GM10248 (cell line): ENCODE measurements at regions of chr1 and their contacts with region 1.

Region 1: DNA sequence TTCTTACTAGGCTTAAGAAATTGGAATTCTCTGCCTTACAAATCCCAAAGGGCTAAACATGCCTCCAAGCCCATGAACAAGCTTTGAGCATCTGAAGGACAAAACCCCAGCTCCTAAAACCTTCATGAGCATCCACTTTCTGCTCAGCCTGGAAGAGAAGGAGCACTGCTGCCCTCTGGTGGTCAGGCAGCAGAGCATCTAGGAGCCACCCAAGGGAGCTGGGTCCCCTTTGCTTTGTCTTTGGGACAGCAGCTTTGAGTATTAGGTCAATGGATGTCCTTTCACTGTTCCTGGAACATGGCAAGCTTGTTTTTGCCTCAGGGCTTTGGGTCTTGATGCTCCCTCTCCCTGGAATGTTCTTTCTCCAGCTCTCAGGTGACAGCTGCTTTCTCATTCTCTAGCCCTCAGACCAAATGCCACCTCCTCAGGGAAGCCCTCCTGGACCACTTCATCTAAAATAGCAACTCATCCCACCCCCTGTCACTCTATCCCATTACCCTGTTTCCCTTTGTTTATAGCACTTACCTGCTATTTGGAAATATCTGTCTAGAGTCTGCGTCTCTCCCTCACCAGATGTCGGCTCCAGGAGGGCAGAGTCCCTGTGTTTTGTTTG is 25.7 kb downstream of the RAB7B start:
- DNase-seq: peak; percentile 80
- CTCF ChIP-seq: peak; percentile 95

Region 2: GRCh38 chr1:205591522-205592351 is 385.8 kb before region 1 on chr1:
- CTCF ChIA-PET with region 1: interaction called, 17 read pairs
- POLR2A ChIA-PET with region 1: no interaction called
- DNase-seq: peak; percentile 83
- CTCF ChIP-seq: peak; percentile 98

Region 3: DNA sequence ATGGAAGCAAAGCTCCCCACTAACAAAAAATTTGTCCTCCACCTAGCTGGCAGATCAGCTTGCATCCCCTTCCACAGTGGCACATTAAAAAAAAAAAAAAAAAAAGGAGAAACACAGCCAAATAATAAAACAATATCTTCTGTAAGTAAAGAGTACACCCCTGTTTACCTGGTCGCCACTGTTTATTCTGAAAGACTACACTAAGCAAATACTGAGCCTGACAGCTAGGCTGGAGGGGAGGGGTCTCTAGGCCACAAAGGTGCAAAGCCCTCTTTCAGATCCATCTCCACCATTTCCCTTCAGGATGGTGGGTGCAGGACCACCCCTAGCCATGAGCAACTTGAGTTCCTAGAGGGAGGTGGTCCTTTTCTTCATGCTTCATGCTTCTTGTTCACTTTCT is 274.4 kb before region 1 on chr1:
- CTCF ChIA-PET with region 1: no interaction called
- POLR2A ChIA-PET with region 1: no interaction called
- DNase-seq: no peak
- CTCF ChIP-seq: no peak

Region 4: DNA sequence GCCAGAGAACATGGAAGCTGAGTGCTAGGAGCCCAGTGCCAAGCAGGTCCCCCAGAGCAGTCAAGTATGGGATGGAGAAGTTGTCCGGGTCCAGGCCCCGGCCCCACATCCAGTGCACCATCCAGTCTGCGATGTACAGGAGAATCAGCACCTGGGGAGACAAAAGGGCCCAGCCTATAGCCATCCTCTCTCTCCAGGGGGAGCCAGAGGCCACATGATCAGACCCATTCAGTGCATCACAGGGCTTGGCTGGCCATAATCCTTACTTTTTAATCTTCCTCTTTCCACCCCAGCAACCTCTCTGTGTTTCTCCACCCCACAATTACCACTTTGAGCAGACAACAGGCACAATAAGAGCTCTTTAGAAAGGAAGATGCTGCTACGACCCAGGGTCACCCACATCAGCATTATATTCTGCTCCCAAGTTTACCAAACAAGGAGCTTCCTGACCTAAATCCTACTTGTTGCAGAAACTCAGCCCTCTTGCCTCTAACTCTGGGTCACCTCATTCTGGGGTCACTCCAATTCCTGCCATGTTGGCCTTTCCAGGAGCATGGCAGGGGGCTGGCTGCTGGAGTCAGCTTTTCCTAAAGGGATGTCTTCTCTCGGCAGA is 185.8 kb before region 1 on chr1:
- CTCF ChIA-PET with region 1: interaction called, 168 read pairs
- POLR2A ChIA-PET with region 1: interaction called, 5 read pairs
- DNase-seq: peak; percentile 77
- CTCF ChIP-seq: peak; percentile 75

Region 5: GRCh38 chr1:205930799-205931281 is 46.7 kb before region 1 on chr1:
- CTCF ChIA-PET with region 1: interaction called, 24 read pairs
- POLR2A ChIA-PET with region 1: no interaction called
- DNase-seq: no peak
- CTCF ChIP-seq: no peak

Region 6: DNA sequence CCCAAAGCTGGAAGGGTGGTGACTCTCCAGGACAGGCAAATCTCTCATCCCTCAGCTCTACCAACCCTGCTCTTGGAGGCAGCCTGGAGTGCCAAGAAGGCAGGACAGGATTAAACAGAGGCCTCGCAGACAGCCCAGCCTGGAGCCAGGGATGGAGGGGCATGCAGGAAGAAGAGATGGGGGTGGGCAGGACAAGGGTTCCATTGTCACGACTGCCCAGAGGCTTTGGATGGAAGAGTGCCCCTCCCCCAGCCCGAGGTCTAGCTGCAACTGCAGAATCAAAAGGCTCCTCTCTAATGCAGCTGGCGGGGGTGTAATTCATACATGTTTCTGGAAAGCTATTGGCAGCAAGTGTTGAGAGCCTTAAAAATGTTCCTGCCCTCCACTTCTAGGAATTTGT is 16.8 kb after region 1 on chr1:
- CTCF ChIA-PET with region 1: interaction called, 53 read pairs
- POLR2A ChIA-PET with region 1: no interaction called
- DNase-seq: no peak
- CTCF ChIP-seq: no peak

Region 7: DNA sequence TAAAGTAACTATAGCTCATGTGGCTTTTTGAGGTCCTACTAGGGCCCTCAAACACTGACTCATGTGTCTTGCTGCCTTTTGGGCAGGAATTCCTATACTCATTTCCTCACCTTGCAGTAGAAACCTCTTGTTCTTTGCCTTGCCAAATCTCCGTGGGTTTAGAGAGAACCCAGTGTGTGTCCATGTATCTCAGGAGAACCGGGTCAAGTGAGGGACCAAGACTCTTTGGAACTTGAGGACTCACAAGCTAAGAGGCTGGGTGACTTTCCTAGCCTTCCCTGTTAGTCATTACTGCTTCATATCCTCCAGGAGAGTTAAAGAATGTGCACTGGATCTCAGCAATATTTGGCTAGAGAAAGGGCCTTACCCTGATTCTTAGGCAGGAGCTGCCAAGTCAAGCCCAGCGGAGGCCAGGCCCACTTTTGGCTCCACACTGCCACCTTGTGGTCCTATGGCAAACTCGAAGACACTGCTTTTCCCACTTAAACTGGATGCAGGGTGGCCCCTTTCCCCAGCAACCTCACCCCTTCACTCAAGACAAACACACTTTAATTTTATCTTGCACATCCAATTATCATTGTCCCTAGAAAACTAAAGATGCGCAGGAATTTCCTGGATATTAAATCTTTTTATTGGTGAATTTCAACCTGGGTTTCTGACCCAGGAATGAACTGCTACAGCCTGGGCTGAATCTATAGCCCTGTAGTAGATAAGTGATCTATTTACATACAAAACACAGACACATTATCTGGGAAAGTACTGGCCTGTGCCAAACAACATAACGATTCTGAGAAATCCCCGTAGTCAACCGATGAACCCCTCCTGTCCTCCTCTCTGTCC is 129.0 kb after region 1 on chr1:
- CTCF ChIA-PET with region 1: interaction called, 323 read pairs
- POLR2A ChIA-PET with region 1: no interaction called
- DNase-seq: peak; percentile 86
- CTCF ChIP-seq: peak; percentile 85